ENCODE measurements at regions of chr2 and their contacts with region 1.

Region 1: GRCh38 chr2:207473049-207473930 is 56.5 kb upstream of the CREB1 start:
- DNase-seq: peak; percentile 86
- H3K4me3 Mint-ChIP-seq: no peak overlapping the region
- H3K27ac Mint-ChIP-seq: peak overlapping the region; percentile 26
- H3K4me1 Mint-ChIP-seq: peaks cover 17% of the 10 kb centered on the region
- H3K27me3 Mint-ChIP-seq: peaks cover 2% of the 10 kb centered on the region

Region 2: DNA sequence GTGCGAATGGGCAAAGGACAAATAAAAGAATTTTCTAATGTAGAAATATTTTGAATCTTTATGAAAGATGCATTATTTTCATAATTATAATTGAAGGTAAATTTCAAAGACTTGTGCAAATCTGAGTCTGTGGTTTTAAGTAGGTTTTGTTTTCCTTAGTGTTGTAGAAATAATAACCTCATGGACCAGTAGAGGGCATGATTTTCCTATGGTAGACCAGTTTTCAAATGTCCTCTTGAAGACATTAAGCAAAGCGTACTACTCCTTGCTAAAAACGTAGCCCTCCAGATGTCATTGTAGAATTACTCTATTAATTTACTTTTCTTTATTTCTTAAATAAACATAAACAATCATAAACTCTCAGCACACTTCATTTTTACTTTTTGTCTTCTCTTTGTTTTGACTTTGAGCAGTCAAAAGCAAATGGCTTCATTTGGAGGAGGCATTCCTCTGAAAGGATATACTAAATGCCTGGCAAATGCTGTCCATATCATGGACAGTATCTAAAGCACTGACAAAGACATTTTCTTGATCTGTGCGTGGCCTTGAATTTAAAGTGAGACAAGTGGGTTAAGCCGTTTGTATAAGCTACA is 916.8 kb before region 1 on chr2:
- intact Hi-C with region 1: loop called (anchors 1 kb)
- DNase-seq: no peak
- H3K4me3 Mint-ChIP-seq: no peak overlapping the region
- H3K27ac Mint-ChIP-seq: no peak overlapping the region
- H3K4me1 Mint-ChIP-seq: peaks cover 14% of the 10 kb centered on the region
- H3K27me3 Mint-ChIP-seq: peaks cover 28% of the 10 kb centered on the region

Region 3: GRCh38 chr2:206765242-206766056 is 707.8 kb before region 1 on chr2 and contains the starts of genes FASTKD2 and MDH1B:
- intact Hi-C with region 1: loop called (anchors 1 kb)
- DNase-seq: peak; percentile 95
- H3K4me3 Mint-ChIP-seq: peak within 1 kb of the TSS; percentile 95
- H3K27ac Mint-ChIP-seq: peak within 1 kb of the TSS; percentile 99
- H3K4me1 Mint-ChIP-seq: peaks cover 29% of the 10 kb centered on the region
- H3K27me3 Mint-ChIP-seq: peaks cover 4% of the 10 kb centered on the region
- total RNA-seq, gene FASTKD2: 39.1 and 39.2 TPM in 2 replicates
- total RNA-seq, gene MDH1B: 0.12 and 0.47 TPM in 2 replicates

Region 4: GRCh38 chr2:206981739-206982340 is 491.4 kb before region 1 on chr2:
- intact Hi-C with region 1: loop called (anchors 1 kb)
- DNase-seq: peak; percentile 84
- H3K4me3 Mint-ChIP-seq: no peak overlapping the region
- H3K27ac Mint-ChIP-seq: no peak overlapping the region
- H3K4me1 Mint-ChIP-seq: peaks cover 8% of the 10 kb centered on the region
- H3K27me3 Mint-ChIP-seq: peaks cover 8% of the 10 kb centered on the region

Region 5: GRCh38 chr2:207223051-207223450 is 250.2 kb before region 1 on chr2:
- intact Hi-C with region 1: loop called (anchors 5 kb)
- DNase-seq: peak; percentile 59
- H3K4me3 Mint-ChIP-seq: no peak overlapping the region
- H3K27ac Mint-ChIP-seq: peak overlapping the region; percentile 59
- H3K4me1 Mint-ChIP-seq: peaks cover 35% of the 10 kb centered on the region
- H3K27me3 Mint-ChIP-seq: peaks cover 6% of the 10 kb centered on the region

Region 6: GRCh38 chr2:207288628-207289027 is 184.7 kb before region 1 on chr2:
- intact Hi-C with region 1: loop called (anchors 5 kb)
- DNase-seq: no peak
- H3K4me3 Mint-ChIP-seq: no peak overlapping the region
- H3K27ac Mint-ChIP-seq: peak overlapping the region; percentile 20
- H3K4me1 Mint-ChIP-seq: peaks cover 39% of the 10 kb centered on the region
- H3K27me3 Mint-ChIP-seq: no peaks in the 10 kb centered on the region

Region 7: DNA sequence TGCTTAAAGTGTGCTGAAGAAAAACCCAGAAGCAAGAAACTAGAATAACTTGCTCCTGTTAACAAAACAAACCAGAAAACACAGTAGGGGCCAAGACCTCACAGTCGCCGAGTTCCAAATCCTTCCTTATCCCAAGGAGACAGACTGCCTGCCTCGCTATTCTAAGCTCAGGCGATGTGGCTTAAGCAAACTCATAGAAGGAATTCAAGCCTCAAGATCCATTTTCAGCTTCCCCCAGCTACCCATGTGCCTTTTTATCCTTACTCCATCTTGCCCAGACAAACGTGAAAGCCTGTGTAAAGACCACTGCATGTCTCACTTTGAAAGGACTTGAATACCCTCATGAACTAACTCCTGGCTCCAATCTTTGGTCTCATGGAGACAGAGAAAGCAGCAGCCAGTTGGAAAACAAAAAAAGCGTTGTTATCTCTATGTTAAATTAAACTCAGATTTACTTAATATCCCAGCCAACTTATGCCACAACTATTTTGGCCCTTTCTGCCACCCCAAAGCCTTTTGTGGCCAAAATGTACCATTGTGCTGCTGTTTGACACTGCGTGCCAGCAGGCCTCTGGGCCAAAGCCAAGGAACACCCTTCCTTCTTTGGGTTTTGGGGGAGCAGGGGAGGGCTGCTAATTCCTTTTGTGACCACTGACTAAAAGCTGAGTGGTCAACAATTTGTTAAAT is 419.6 kb after region 1 on chr2:
- intact Hi-C with region 1: no loop called
- DNase-seq: no peak
- H3K4me3 Mint-ChIP-seq: no peak overlapping the region
- H3K27ac Mint-ChIP-seq: no peak overlapping the region
- H3K4me1 Mint-ChIP-seq: no peaks in the 10 kb centered on the region
- H3K27me3 Mint-ChIP-seq: no peaks in the 10 kb centered on the region

Measured in activated CD4-positive, alpha-beta T cell treated with anti-CD3 and anti-CD28 coated beads, Interleukin-2, amount 10 ng/mL, durations not matched to agents 24 days and 14 days (primary cell).